Dorsolateral prefrontal cortex (tissue), 120 donors: ENCODE measurements at regions of chr9 and their contacts with region 1.

Region 1: DNA sequence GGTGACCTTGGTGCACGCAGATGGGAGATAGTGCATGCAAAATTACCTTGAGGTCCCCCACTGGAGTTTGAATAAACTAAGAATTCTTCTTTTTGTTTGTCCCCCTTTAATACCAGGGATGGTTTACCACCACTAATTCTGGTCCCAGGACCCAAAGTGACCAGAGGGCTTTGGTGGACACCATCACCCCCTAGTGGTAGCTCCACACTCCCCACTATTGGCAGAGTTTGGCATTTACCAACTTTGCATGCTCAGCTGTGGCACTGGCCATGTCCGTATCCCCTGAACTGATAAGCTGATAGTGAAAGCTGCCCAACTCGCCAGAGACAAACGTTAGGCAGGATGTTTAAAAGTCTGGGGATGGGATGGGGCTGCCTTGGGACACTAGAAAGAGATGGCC is 3.3 kb downstream of the ASTN2 start:
- DNase-seq: peak; percentile 49 to 85 (median 70)
- H3K4me3 ChIP-seq: peak overlapping the region in 48 of 59 donors; percentile 14 to 91 (median 78)
- H3K27ac ChIP-seq: peak overlapping the region in 8 of 59 donors; percentile 1 to 71 (median 40)
- H3K27me3 ChIP-seq: no peaks in the 10 kb centered on the region
- CTCF ChIP-seq: peak; percentile 69 to 92 (median 84)

Region 2: GRCh38 chr9:117073539-117074341 is 337.8 kb before region 1 on chr9:
- intact Hi-C with region 1: loop called in 1 of 2 experiments (anchors 2 kb)
- DNase-seq: peak in 9 of 10 donors; percentile 51 to 76 (median 58)
- H3K4me3 ChIP-seq: no peak overlapping the region
- H3K27ac ChIP-seq: no peak overlapping the region
- H3K27me3 ChIP-seq: no peaks in the 10 kb centered on the region
- CTCF ChIP-seq: peak; percentile 58 to 87 (median 75)

Region 3: DNA sequence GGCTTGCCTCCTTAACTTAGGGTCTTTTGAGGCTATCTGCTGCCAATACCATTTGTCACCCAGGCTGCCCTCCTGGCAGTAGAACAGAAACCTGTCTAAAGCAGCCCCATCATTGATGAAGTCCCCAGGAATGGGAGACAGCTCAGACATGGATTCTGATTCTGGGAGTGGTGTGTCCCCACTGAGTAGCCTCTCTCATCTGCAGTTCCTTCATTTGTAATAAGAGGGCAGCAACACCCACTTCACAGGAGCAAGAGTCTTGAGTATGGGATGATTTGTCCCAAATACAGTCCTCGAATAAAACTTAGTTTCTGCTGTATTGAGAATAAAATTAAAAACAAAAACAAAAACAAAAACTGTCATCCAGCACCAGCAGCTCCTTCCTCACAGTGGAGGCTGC is 164.3 kb before region 1 on chr9:
- intact Hi-C with region 1: loop called (anchors 2 to 5 kb)
- DNase-seq: peak in 2 of 10 donors; percentile 33 to 34
- H3K4me3 ChIP-seq: no peak overlapping the region
- H3K27ac ChIP-seq: peak overlapping the region in 1 of 59 donors; percentile 31
- H3K27me3 ChIP-seq: no peaks in the 10 kb centered on the region
- CTCF ChIP-seq: peak; percentile 30 to 78 (median 65)

Region 4: DNA sequence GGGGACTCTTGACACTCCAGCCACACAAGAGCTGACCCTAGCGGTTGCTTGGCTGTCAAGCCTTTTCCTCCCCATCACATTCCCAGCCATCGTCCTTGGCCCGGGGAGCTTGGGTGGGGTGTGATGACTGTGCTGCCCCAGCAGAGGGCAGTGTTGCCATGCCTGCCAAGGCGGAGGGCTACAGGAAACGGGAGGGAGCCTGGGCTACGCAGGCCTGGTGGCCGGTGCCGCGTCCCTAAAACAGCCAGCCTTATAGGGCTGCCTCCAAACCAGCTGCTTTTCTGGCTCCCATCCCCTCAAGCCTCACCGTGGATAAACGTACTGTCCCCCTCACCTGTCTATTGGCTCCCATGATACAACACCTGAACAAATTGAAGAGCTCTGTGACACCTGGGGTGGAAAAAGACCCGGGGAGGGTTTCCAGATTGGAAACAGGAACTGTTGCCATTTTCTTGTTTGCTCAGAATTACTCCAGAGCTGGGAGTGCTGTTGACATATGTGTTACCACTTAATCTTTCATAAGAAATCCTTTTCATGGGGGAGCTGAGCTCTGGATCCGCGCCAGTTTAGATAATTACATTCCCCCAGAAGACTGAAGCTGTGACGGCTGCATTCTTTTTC is 76.1 kb after region 1 on chr9:
- intact Hi-C with region 1: loop called in 1 of 2 experiments (anchors 2 kb)
- DNase-seq: peak; percentile 59 to 90 (median 72)
- H3K4me3 ChIP-seq: peak overlapping the region in 49 of 59 donors; percentile 4 to 61 (median 37)
- H3K27ac ChIP-seq: peak overlapping the region in 16 of 59 donors; percentile 0 to 78 (median 47)
- H3K27me3 ChIP-seq: no peaks in the 10 kb centered on the region
- CTCF ChIP-seq: peak; percentile 78 to 100 (median 99)